ENCODE measurements at regions of chr17 and their contacts with region 1.

Region 1: GRCh38 chr17:8057691-8058114 is 18.8 kb downstream of the ALOX15B start:
- DNase-seq: peak; percentile 54
- H3K4me3 Mint-ChIP-seq: no peak overlapping the region
- H3K27ac Mint-ChIP-seq: no peak overlapping the region
- H3K4me1 Mint-ChIP-seq: peaks cover 27% of the 10 kb centered on the region
- H3K27me3 Mint-ChIP-seq: peaks cover 58% of the 10 kb centered on the region

Region 2: GRCh38 chr17:7744416-7744815 is 313.3 kb before region 1 on chr17:
- CTCF ChIA-PET with region 1: interaction called, 12 read pairs
- POLR2A ChIA-PET with region 1: no interaction called
- DNase-seq: no peak
- H3K4me3 Mint-ChIP-seq: no peak overlapping the region
- H3K27ac Mint-ChIP-seq: no peak overlapping the region
- H3K4me1 Mint-ChIP-seq: no peaks in the 10 kb centered on the region
- H3K27me3 Mint-ChIP-seq: peaks cover 24% of the 10 kb centered on the region

Region 3: DNA sequence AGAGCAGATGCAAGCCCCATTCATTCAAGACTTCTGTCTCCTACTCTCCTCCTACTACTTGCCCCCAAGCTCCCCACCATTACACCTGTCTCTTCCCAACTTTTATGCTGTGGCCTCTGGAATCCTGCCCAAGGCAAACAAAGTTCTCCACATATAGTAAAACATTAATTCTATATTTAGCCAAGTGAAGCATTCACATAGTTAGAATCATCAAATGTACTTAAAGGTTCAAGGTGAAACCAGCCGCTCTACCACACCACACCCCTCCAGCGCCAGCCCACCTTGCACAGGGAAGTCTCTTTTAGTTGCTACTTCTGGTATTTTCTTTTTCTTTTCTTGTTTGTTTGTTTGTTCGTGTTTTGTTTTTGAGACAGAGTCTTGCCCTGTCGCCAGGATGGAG is 80.7 kb before region 1 on chr17:
- CTCF ChIA-PET with region 1: no interaction called
- POLR2A ChIA-PET with region 1: no interaction called
- DNase-seq: no peak
- H3K4me3 Mint-ChIP-seq: no peak overlapping the region
- H3K27ac Mint-ChIP-seq: no peak overlapping the region
- H3K4me1 Mint-ChIP-seq: peaks cover 11% of the 10 kb centered on the region
- H3K27me3 Mint-ChIP-seq: peaks cover 22% of the 10 kb centered on the region

Region 4: GRCh38 chr17:7989781-7990655 is 67.7 kb before region 1 on chr17:
- CTCF ChIA-PET with region 1: interaction called, 40 read pairs
- POLR2A ChIA-PET with region 1: interaction called, 3 read pairs
- DNase-seq: peak; percentile 92
- H3K4me3 Mint-ChIP-seq: peak overlapping the region; percentile 72
- H3K27ac Mint-ChIP-seq: peak overlapping the region; percentile 75
- H3K4me1 Mint-ChIP-seq: peaks cover 28% of the 10 kb centered on the region
- H3K27me3 Mint-ChIP-seq: peaks cover 10% of the 10 kb centered on the region

Region 5: GRCh38 chr17:8073627-8074484 is 16.2 kb after region 1 on chr17:
- CTCF ChIA-PET with region 1: interaction called, 149 read pairs
- POLR2A ChIA-PET with region 1: interaction called, 3 read pairs
- DNase-seq: peak; percentile 84
- H3K4me3 Mint-ChIP-seq: peak overlapping the region; percentile 53
- H3K27ac Mint-ChIP-seq: no peak overlapping the region
- H3K4me1 Mint-ChIP-seq: peaks cover 27% of the 10 kb centered on the region
- H3K27me3 Mint-ChIP-seq: peaks cover 62% of the 10 kb centered on the region

Region 6: GRCh38 chr17:8091033-8091687 is 33.5 kb after region 1 on chr17:
- CTCF ChIA-PET with region 1: interaction called, 17 read pairs
- POLR2A ChIA-PET with region 1: interaction called, 3 read pairs
- DNase-seq: no peak
- H3K4me3 Mint-ChIP-seq: no peak overlapping the region
- H3K27ac Mint-ChIP-seq: no peak overlapping the region
- H3K4me1 Mint-ChIP-seq: peaks cover 16% of the 10 kb centered on the region
- H3K27me3 Mint-ChIP-seq: peaks cover 45% of the 10 kb centered on the region

Region 7: GRCh38 chr17:8156246-8156992 is 98.7 kb after region 1 on chr17:
- CTCF ChIA-PET with region 1: no interaction called
- POLR2A ChIA-PET with region 1: no interaction called
- DNase-seq: peak; percentile 100
- H3K4me3 Mint-ChIP-seq: no peak overlapping the region
- H3K27ac Mint-ChIP-seq: no peak overlapping the region
- H3K4me1 Mint-ChIP-seq: peaks cover 51% of the 10 kb centered on the region
- H3K27me3 Mint-ChIP-seq: no peaks in the 10 kb centered on the region

Region 8: DNA sequence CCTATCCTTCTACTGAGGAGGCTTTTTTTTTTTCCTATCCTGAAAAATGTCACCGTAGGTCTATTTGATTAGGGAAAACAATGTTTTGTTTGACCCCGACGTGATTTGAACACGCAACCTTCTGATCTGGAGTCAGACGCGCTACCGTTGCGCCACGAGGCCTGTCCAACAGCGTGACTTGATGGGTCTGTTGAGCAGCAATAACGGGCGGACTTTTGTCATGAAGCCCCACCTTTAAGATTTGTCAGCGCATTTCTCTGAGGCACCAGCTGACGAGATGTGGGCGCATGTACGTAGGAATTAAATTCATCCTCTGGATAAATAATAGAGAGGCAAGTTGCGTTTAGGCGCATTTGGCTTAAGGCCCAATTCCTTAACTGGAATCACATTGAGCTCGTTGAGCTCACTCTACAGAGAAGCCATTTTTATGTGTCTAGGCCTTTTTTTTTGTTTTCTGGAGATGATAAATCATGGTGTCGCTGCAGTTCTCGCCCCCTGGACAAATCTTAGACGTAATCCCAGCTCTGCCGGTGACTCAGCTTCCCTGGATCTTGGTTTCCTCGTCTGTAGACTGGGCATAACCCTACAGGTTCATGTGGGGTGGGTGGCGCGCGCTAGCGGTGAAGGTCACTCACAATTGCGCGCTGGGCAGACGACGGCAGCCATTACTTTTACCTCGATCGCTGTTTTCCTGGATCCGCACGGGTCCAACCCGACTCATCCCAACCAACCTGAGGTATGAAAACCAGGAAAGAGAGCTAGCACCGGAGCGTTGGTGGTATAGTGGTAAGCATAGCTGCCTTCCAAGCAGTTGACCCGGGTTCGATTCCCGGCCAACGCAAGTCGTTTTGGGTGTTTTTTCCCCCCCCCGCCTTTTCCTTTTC is 163.3 kb after region 1 on chr17:
- CTCF ChIA-PET with region 1: no interaction called
- POLR2A ChIA-PET with region 1: no interaction called
- DNase-seq: peak; percentile 88
- H3K4me3 Mint-ChIP-seq: peak overlapping the region; percentile 95
- H3K27ac Mint-ChIP-seq: peak overlapping the region; percentile 99
- H3K4me1 Mint-ChIP-seq: peaks cover 52% of the 10 kb centered on the region
- H3K27me3 Mint-ChIP-seq: peaks cover 2% of the 10 kb centered on the region

Measured in activated CD4-positive, alpha-beta memory T cell treated with anti-CD3 and anti-CD28 coated beads, Interleukin-2, amount 10 ng/mL, durations not matched to agents 7 days and 5 days (primary cell).